Gastrocnemius medialis (tissue), 4 donors: ENCODE measurements at regions of chr6 and their contacts with region 1.

Region 1: DNA sequence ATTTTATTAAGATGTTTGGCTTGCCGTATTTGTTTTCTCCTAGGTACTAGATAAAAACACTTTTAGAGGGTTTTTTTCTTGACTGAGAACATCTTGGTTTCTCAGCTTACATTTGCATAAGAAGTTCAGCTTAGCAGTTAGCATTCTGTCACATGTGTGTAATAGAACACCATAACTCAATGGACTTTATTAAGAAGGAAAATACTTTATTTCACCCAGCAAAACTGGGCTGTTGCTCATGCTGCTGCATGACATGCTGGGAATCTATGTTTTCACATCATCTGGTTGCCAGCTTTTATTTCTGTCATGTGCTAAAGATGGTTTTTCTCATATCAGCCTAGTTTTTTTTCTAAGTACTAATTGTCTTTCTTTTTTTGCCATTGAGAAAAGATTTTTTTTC is 144.6 kb downstream of the UTRN start:
- DNase-seq: no peak
- ATAC-seq: no peak
- H3K4me3 ChIP-seq: no peak overlapping the region
- H3K27ac ChIP-seq: no peak overlapping the region
- H3K4me1 ChIP-seq: peaks cover 0 to under 1% of the 10 kb centered on the region in 2 donors
- H3K27me3 ChIP-seq: no peaks in the 10 kb centered on the region
- CTCF ChIP-seq: no peak
- POLR2A ChIP-seq: no peak

Region 2: DNA sequence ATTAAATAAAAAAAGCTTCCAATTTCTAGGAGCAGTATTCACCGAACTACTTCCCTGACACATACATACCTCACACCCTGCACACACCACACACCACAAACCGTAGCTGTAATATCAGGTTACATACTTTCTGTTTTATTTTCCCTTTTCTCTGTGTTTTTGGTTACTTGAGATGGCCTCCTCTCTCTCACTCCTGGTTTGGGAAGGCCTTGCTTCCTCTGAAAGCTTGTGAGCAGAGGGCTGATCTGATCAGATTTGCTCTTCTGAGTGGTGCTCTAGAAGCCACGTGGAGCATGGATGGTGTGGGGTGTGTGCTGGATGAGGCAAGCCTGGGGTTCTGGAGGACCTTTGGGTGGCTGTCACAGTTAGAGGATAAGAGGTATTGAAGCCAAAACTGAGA is 123.8 kb before region 1 on chr6:
- in situ Hi-C with region 1: no loop called
- intact Hi-C with region 1: no loop called
- DNase-seq: no peak
- ATAC-seq: no peak
- H3K4me3 ChIP-seq: no peak overlapping the region
- H3K27ac ChIP-seq: no peak overlapping the region
- H3K4me1 ChIP-seq: peaks cover 4 to 5% of the 10 kb centered on the region in 2 donors
- H3K27me3 ChIP-seq: no peaks in the 10 kb centered on the region
- CTCF ChIP-seq: no peak
- POLR2A ChIP-seq: no peak

Region 3: GRCh38 chr6:144384427-144384826 is 45.3 kb before region 1 on chr6:
- in situ Hi-C with region 1: no loop called
- intact Hi-C with region 1: no loop called
- DNase-seq: no peak
- ATAC-seq: no peak
- H3K4me3 ChIP-seq: no peak overlapping the region
- H3K27ac ChIP-seq: no peak overlapping the region
- H3K4me1 ChIP-seq: peaks cover 0 to 15% of the 10 kb centered on the region in 2 donors
- H3K27me3 ChIP-seq: no peaks in the 10 kb centered on the region
- CTCF ChIP-seq: no peak
- POLR2A ChIP-seq: no peak

Region 4: GRCh38 chr6:144460327-144461095 is 30.8 kb after region 1 on chr6:
- in situ Hi-C with region 1: no loop called
- intact Hi-C with region 1: loop called (anchors 1 kb)
- DNase-seq: no peak
- ATAC-seq: no peak
- H3K4me3 ChIP-seq: no peak overlapping the region
- H3K27ac ChIP-seq: no peak overlapping the region
- H3K4me1 ChIP-seq: no peaks in the 10 kb centered on the region
- H3K27me3 ChIP-seq: no peaks in the 10 kb centered on the region
- CTCF ChIP-seq: no peak
- POLR2A ChIP-seq: no peak